Pancreas (tissue), 10 donors: ENCODE measurements at regions of chr9 and their contacts with region 1.

Region 1: GRCh38 chr9:122453677-122454135 is 24.0 kb downstream of the OR1J1 start:
- DNase-seq: no peak
- ATAC-seq: peak in 1 of 4 donors; percentile 15
- H3K4me3 ChIP-seq: no peak overlapping the region
- H3K27ac ChIP-seq: no peak overlapping the region
- H3K4me1 ChIP-seq: no peaks in the 10 kb centered on the region
- H3K27me3 ChIP-seq: peaks cover 0 to 4% (median 0%) of the 10 kb centered on the region in 4 donors
- CTCF ChIP-seq: no peak

Region 2: GRCh38 chr9:122389799-122390481 is 63.8 kb before region 1 on chr9:
- intact Hi-C with region 1: loop called in 1 of 3 experiments (anchors 10 kb)
- DNase-seq: no peak
- ATAC-seq: peak in 2 of 4 donors; percentile 47 to 66
- H3K4me3 ChIP-seq: no peak overlapping the region
- H3K27ac ChIP-seq: no peak overlapping the region
- H3K4me1 ChIP-seq: no peaks in the 10 kb centered on the region
- H3K27me3 ChIP-seq: no peaks in the 10 kb centered on the region
- CTCF ChIP-seq: no peak